ENCODE measurements at regions of chr10 and their contacts with region 1.

Region 1: GRCh38 chr10:122374237-122374869 is at the start of gene PLEKHA1:
- DNase-seq: peak; percentile 95
- H3K4me3 Mint-ChIP-seq: peak within 1 kb of the TSS; percentile 89
- H3K27ac Mint-ChIP-seq: peak within 1 kb of the TSS; percentile 94
- H3K4me1 Mint-ChIP-seq: peaks cover 36% of the 10 kb centered on the region
- H3K27me3 Mint-ChIP-seq: peaks cover 15% of the 10 kb centered on the region
- total RNA-seq, gene PLEKHA1: 11.1 to 12.9 TPM

Region 2: GRCh38 chr10:121927841-121928527 is 446.4 kb before region 1 on chr10 and contains the start of gene ATE1:
- CTCF ChIA-PET with region 1: no interaction called
- POLR2A ChIA-PET with region 1: no interaction called
- intact Hi-C with region 1: loop called (anchors 1 kb)
- DNase-seq: peak; percentile 87
- H3K4me3 Mint-ChIP-seq: peak within 1 kb of the TSS; percentile 94
- H3K27ac Mint-ChIP-seq: peak within 1 kb of the TSS; percentile 95
- H3K4me1 Mint-ChIP-seq: peaks cover 27% of the 10 kb centered on the region
- H3K27me3 Mint-ChIP-seq: no peaks in the 10 kb centered on the region
- total RNA-seq, gene ATE1: 19.4 to 23.1 TPM

Region 3: DNA sequence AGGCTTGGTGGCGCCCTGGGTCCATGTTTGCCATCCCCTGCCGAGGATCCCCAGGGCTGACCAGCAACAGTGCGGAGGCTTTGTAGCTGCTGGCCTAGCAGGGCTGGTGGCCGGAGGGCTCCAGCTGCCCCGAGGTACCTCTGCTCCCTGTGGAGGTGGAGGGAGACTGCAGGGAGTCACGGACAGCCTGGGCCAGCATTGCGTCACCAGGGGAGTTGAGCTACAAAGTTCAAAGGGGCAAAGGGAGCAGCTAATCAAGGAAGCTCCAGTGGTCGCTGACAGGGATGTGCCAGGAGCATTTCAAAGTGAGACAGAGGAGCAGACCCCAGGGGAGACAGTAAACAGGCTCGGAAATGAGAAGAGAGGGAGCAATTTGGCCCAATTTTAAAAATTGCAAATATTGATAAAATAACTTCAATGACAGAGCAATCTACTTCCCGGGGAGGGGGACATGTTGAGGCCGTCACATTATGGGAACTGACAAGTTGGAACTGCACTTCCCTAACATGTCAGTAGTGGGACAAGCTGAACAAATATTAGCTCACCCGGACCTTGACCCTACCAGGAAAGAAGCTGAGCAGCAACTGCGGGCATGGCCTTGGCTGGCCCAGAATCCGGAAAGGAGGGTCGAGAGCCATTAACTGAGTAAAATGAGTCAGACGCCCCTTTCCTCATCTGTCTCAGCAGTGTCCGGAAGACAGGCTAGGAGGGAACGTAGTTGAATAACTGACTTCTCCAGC is 63.9 kb before region 1 on chr10:
- CTCF ChIA-PET with region 1: no interaction called
- POLR2A ChIA-PET with region 1: no interaction called
- intact Hi-C with region 1: no loop called
- DNase-seq: no peak
- H3K4me3 Mint-ChIP-seq: no peak overlapping the region
- H3K27ac Mint-ChIP-seq: no peak overlapping the region
- H3K4me1 Mint-ChIP-seq: no peaks in the 10 kb centered on the region
- H3K27me3 Mint-ChIP-seq: no peaks in the 10 kb centered on the region

Region 4: GRCh38 chr10:122342293-122343134 is 31.8 kb before region 1 on chr10:
- CTCF ChIA-PET with region 1: interaction called, 15 read pairs
- POLR2A ChIA-PET with region 1: no interaction called
- intact Hi-C with region 1: loop called (anchors 1 kb)
- DNase-seq: peak; percentile 68
- H3K4me3 Mint-ChIP-seq: no peak overlapping the region
- H3K27ac Mint-ChIP-seq: no peak overlapping the region
- H3K4me1 Mint-ChIP-seq: peaks cover 8% of the 10 kb centered on the region
- H3K27me3 Mint-ChIP-seq: peaks cover 3% of the 10 kb centered on the region

Region 5: DNA sequence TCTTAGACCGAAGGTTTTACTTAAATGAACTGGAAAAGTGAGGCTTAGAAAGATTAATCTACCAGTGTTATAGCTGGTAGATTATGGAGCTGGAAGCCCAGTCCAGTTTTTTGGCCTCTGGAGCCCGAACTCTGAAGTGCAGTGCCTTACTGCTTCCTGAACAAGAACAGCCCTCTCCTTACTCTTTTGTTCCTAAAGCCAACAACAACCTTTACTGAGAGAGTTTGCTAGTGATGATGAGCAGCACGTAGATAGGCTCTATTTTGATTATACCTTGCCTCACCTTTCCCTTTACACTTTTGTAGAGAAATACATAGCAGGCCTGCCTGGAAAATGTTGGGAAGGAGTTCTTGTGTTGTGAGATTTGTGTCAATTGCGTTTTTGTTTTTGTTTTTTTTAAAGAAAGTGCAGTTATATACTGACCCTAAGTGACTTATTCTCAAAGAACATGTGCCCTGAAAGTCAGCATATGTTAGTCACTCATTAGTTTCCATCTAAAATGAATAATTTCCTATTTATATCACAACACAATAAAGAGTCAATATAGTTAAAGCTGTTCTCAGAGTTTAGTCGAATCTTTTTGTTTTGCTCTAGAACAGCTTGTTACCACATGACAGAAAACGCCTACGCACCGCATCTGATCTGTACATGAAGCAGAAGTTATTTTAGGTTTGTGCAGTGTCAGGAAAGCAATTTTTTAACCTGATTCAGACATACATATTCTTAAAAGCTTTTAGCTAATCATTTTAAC is 33.2 kb after region 1 on chr10:
- CTCF ChIA-PET with region 1: no interaction called
- POLR2A ChIA-PET with region 1: interaction called, 5 read pairs
- intact Hi-C with region 1: loop called (anchors 1 kb)
- DNase-seq: peak; percentile 79
- H3K4me3 Mint-ChIP-seq: no peak overlapping the region
- H3K27ac Mint-ChIP-seq: peak overlapping the region; percentile 78
- H3K4me1 Mint-ChIP-seq: peaks cover 45% of the 10 kb centered on the region
- H3K27me3 Mint-ChIP-seq: no peaks in the 10 kb centered on the region

Region 6: GRCh38 chr10:122435212-122435827 is 61.0 kb after region 1 on chr10:
- CTCF ChIA-PET with region 1: interaction called, 28 read pairs
- POLR2A ChIA-PET with region 1: no interaction called
- intact Hi-C with region 1: no loop called
- DNase-seq: no peak
- H3K4me3 Mint-ChIP-seq: no peak overlapping the region
- H3K27ac Mint-ChIP-seq: no peak overlapping the region
- H3K4me1 Mint-ChIP-seq: peaks cover 2% of the 10 kb centered on the region
- H3K27me3 Mint-ChIP-seq: no peaks in the 10 kb centered on the region

Region 7: DNA sequence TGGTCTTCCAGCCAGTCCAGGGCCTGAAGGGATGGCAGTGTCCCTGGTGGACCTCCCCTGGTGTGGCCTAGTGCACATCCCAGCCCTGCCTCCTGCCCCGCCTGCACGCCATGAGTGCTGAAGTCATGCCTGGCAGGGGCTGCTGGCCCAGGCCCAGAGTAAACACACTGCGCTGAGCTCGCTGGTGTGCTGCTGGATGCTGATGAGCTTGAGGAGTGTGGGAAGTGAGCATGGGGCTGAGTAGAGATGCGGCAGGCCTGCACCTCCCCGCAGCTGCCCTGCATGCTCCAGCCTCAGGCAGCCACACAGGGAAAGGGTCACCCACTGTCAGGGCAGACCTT is 130.2 kb after region 1 on chr10:
- CTCF ChIA-PET with region 1: no interaction called
- POLR2A ChIA-PET with region 1: no interaction called
- intact Hi-C with region 1: no loop called
- DNase-seq: no peak
- H3K4me3 Mint-ChIP-seq: no peak overlapping the region
- H3K27ac Mint-ChIP-seq: no peak overlapping the region
- H3K4me1 Mint-ChIP-seq: no peaks in the 10 kb centered on the region
- H3K27me3 Mint-ChIP-seq: no peaks in the 10 kb centered on the region

Region 8: GRCh38 chr10:123154092-123154921 is 780.0 kb after region 1 on chr10 and contains the start of gene BUB3:
- CTCF ChIA-PET with region 1: no interaction called
- POLR2A ChIA-PET with region 1: no interaction called
- intact Hi-C with region 1: loop called (anchors 2 kb)
- DNase-seq: peak; percentile 98
- H3K4me3 Mint-ChIP-seq: peak within 1 kb of the TSS; percentile 100
- H3K27ac Mint-ChIP-seq: peak within 1 kb of the TSS; percentile 100
- H3K4me1 Mint-ChIP-seq: peaks cover 61% of the 10 kb centered on the region
- H3K27me3 Mint-ChIP-seq: peaks cover 9% of the 10 kb centered on the region
- total RNA-seq, gene BUB3: 259 to 265 TPM

Measured in activated CD4-positive, alpha-beta memory T cell treated with anti-CD3 and anti-CD28 coated beads for 36 hours (primary cell).